ENCODE measurements at regions of chr10 and their contacts with region 1.

Region 1: DNA sequence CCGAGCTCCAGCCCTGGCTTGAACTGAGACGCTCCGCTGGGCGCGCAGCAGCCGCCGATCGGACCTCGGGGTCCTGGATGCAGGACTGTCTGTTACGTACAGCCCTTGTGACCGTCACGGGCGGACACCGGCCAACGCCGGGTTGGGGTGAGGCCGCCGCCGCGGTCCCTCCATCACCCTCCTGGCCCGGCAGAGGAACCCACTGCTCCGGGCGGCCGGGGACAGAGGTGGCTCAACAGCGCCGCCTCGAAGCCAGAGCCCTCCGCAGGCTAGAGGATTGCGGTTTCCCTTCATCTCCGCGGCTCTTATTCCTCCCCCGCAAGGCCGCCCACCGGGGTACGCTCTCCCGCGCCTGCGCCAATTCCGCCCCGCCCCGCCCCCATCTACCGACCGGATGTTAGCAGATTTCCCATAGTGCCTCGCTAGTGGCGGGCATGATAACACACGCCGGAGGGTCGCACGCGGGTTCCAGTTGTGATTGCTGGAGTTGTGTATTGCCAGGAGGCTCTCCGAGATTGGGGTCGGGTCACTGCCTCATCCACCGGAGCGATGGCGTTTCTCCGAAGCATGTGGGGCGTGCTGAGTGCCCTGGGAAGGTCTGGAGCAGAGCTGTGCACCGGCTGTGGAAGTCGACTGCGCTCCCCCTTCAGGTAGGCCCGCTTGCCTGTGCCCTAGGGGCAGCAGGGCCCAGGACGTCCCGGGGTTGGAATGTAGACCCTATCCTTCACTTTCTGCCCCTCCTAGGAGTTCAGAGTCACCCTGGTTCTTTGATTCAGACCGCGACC is at the start of gene TFAM:
- DNase-seq: peak; percentile 76 to 94
- H3K4me3 ChIP-seq: peak within 1 kb of the TSS; percentile 65
- H3K27ac ChIP-seq: peak within 1 kb of the TSS; percentile 55
- H3K4me1 ChIP-seq: peaks cover 23% of the 10 kb centered on the region
- H3K27me3 ChIP-seq: no peaks in the 10 kb centered on the region
- CTCF ChIP-seq: peak; percentile 42; the same call in 1 of the 2 replicates
- total RNA-seq, gene TFAM: 80.6 and 87.1 TPM in 2 replicates

Region 2: DNA sequence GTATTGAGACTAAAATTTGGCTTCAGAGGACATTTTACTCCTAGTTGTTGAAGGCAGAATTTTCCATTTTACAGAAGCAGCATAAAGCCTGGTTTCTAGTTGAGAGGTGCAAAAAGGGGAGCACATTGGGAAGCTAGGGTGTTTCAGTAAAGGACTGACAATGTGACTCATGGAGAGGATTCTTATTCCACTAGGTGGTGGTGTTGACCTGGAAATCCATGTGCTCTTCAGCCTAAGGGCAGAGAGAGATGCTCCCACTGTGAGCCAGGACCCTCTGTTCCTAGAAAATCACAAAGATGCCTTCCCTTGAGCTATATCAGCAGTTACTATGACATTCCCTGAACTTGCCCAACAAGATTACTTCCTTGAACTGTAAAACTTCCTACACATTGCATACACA is 805.3 kb before region 1 on chr10:
- CTCF ChIA-PET with region 1: no interaction called
- POLR2A ChIA-PET with region 1: no interaction called
- intact Hi-C with region 1: no loop called
- DNase-seq: no peak
- H3K4me3 ChIP-seq: no peak overlapping the region
- H3K27ac ChIP-seq: no peak overlapping the region
- H3K4me1 ChIP-seq: no peaks in the 10 kb centered on the region
- H3K27me3 ChIP-seq: no peaks in the 10 kb centered on the region
- CTCF ChIP-seq: peak; percentile 62

Region 3: GRCh38 chr10:58177362-58177947 is 207.7 kb before region 1 on chr10:
- CTCF ChIA-PET with region 1: no interaction called
- POLR2A ChIA-PET with region 1: no interaction called
- intact Hi-C with region 1: loop called (anchors 5 kb)
- DNase-seq: no peak
- H3K4me3 ChIP-seq: no peak overlapping the region
- H3K27ac ChIP-seq: no peak overlapping the region
- H3K4me1 ChIP-seq: no peaks in the 10 kb centered on the region
- H3K27me3 ChIP-seq: no peaks in the 10 kb centered on the region
- CTCF ChIP-seq: peak; percentile 91

Region 4: GRCh38 chr10:58299580-58299979 is 85.6 kb before region 1 on chr10:
- CTCF ChIA-PET with region 1: no interaction called
- POLR2A ChIA-PET with region 1: no interaction called
- intact Hi-C with region 1: loop called (anchors 1 kb)
- DNase-seq: peak; percentile 48 to 54
- H3K4me3 ChIP-seq: no peak overlapping the region
- H3K27ac ChIP-seq: no peak overlapping the region
- H3K4me1 ChIP-seq: no peaks in the 10 kb centered on the region
- H3K27me3 ChIP-seq: no peaks in the 10 kb centered on the region
- CTCF ChIP-seq: peak; percentile 98

Region 5: GRCh38 chr10:58334817-58335305 is 50.3 kb before region 1 on chr10 and contains the start of gene UBE2D1:
- CTCF ChIA-PET with region 1: interaction called, 5 read pairs
- POLR2A ChIA-PET with region 1: no interaction called
- intact Hi-C with region 1: loop called (anchors 1 kb)
- DNase-seq: peak; percentile 78 to 89
- H3K4me3 ChIP-seq: peak within 1 kb of the TSS; percentile 66
- H3K27ac ChIP-seq: peak within 1 kb of the TSS; percentile 60
- H3K4me1 ChIP-seq: peaks cover 23% of the 10 kb centered on the region
- H3K27me3 ChIP-seq: no peaks in the 10 kb centered on the region
- CTCF ChIP-seq: no peak; the same call in 1 of the 2 replicates
- total RNA-seq, gene UBE2D1: 16.9 and 24.0 TPM in 2 replicates